ENCODE measurements at regions of chr16 and their contacts with region 1.

Region 1: GRCh38 chr16:73058221-73058615 is 10.3 kb upstream of the ZFHX3 start:
- DNase-seq: no peak
- ATAC-seq: peak; percentile 24

Region 2: GRCh38 chr16:72847187-72848027 is 210.8 kb before region 1 on chr16:
- intact Hi-C with region 1: loop called (anchors 5 kb)
- DNase-seq: no peak
- ATAC-seq: peak; percentile 62

Region 3: GRCh38 chr16:73082608-73083007 is 24.4 kb after region 1 on chr16:
- intact Hi-C with region 1: no loop called
- DNase-seq: no peak
- ATAC-seq: peak; percentile 59

Region 4: DNA sequence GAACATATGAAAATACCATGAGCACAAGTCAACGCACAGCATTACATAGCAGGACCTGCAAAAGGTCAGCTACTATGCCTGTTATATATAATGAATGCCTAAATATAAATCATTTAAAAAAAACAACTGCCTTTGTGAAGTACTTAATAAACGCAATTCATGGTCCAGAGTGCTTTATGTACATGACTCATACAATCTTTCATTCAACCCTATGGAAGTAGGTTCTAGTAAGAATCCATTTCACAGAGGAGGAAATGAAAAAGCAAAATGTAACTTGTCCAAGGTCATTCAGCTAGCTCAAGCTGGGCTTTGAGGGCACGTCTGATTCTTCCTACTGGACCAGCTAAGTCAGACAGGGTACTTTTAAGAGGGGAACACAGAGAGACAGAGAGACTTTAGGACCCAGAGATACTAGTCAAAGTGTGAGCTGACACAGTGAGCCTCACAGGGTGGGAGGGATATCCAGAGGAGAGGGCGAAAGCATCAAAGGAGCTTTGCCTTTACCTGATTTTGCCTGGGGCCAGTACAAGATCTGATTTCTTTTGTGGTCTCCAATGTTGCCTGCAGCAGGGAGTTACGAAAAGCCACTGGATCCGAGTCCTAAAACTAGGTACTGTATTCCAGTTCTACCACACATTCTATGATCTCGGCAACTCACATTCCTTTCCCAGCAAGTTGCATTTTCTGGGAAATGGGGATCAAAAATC is 73.1 kb after region 1 on chr16:
- intact Hi-C with region 1: no loop called
- DNase-seq: no peak
- ATAC-seq: no peak